K562 (cell line): ENCODE measurements at regions of chr1 and their contacts with region 1.

Region 1: GRCh38 chr1:165543532-165544495 is at the start of gene LRRC52:
- DNase-seq: no peak
- ATAC-seq: peak; percentile 33; the same call in 1 of the 3 replicates
- H3K4me3 ChIP-seq: no peak within 1 kb of the TSS
- H3K27ac ChIP-seq: no peak within 1 kb of the TSS
- H3K4me1 ChIP-seq: no peaks in the 10 kb centered on the region
- H3K27me3 ChIP-seq: peaks cover 3 to 19% of the 10 kb centered on the region in 2 experiments
- CTCF ChIP-seq: no peak
- EP300 ChIP-seq: no peak
- POLR2A ChIP-seq: no peak
- RAD21 ChIP-seq: no peak
- polyA plus RNA-seq, gene LRRC52: not detected

Region 2: GRCh38 chr1:164518692-164519332 is 1025.0 kb before region 1 on chr1:
- CTCF ChIA-PET with region 1: no interaction called
- POLR2A ChIA-PET with region 1: no interaction called
- in situ Hi-C with region 1: no loop called
- intact Hi-C with region 1: no loop called
- DNase-seq: no peak
- ATAC-seq: no peak
- H3K4me3 ChIP-seq: no peak overlapping the region
- H3K27ac ChIP-seq: no peak overlapping the region
- H3K4me1 ChIP-seq: no peaks in the 10 kb centered on the region
- H3K27me3 ChIP-seq: no peaks in the 10 kb centered on the region
- CTCF ChIP-seq: no peak
- EP300 ChIP-seq: no peak
- POLR2A ChIP-seq: no peak
- RAD21 ChIP-seq: no peak

Region 3: GRCh38 chr1:164922585-164922984 is 621.2 kb before region 1 on chr1:
- CTCF ChIA-PET with region 1: no interaction called
- POLR2A ChIA-PET with region 1: no interaction called
- in situ Hi-C with region 1: no loop called
- intact Hi-C with region 1: no loop called
- DNase-seq: no peak
- ATAC-seq: no peak
- H3K4me3 ChIP-seq: no peak overlapping the region
- H3K27ac ChIP-seq: no peak overlapping the region
- H3K4me1 ChIP-seq: no peaks in the 10 kb centered on the region
- H3K27me3 ChIP-seq: peaks cover 0 to 6% of the 10 kb centered on the region in 2 experiments; a peak in 1 of 5 replicates
- CTCF ChIP-seq: no peak
- EP300 ChIP-seq: no peak
- POLR2A ChIP-seq: no peak
- RAD21 ChIP-seq: no peak

Region 4: GRCh38 chr1:165501970-165502348 is 41.9 kb before region 1 on chr1:
- CTCF ChIA-PET with region 1: no interaction called
- POLR2A ChIA-PET with region 1: no interaction called
- in situ Hi-C with region 1: no loop called
- intact Hi-C with region 1: loop called (anchors 5 kb)
- DNase-seq: no peak
- ATAC-seq: no peak
- H3K4me3 ChIP-seq: no peak overlapping the region
- H3K27ac ChIP-seq: no peak overlapping the region
- H3K4me1 ChIP-seq: no peaks in the 10 kb centered on the region
- H3K27me3 ChIP-seq: 0 out of 5 replicates have a peak, but pooled peaks cover 0 to 11% of the 10 kb centered on the region in 2 experiments
- CTCF ChIP-seq: no peak
- EP300 ChIP-seq: no peak
- POLR2A ChIP-seq: no peak
- RAD21 ChIP-seq: no peak